ENCODE measurements at regions of chr16 and their contacts with region 1.

Region 1: GRCh38 chr16:30355144-30355894 is at the start of gene CD2BP2:
- DNase-seq: peak; percentile 81
- ATAC-seq: peak; percentile 84
- H3K4me3 Mint-ChIP-seq: peak within 1 kb of the TSS; percentile 96
- H3K27ac Mint-ChIP-seq: peak within 1 kb of the TSS; percentile 91
- H3K4me1 Mint-ChIP-seq: peaks cover 49% of the 10 kb centered on the region
- H3K27me3 Mint-ChIP-seq: no peaks in the 10 kb centered on the region
- CTCF ChIP-seq: no peak
- total RNA-seq, gene CD2BP2: 87.8 and 88.0 TPM in 2 replicates

Region 2: GRCh38 chr16:30370444-30371247 is 15.3 kb after region 1 on chr16 and contains the start of gene TBC1D10B:
- CTCF ChIA-PET with region 1: interaction called, 7 read pairs
- POLR2A ChIA-PET with region 1: interaction called, 36 read pairs
- intact Hi-C with region 1: loop called (anchors 1 kb)
- DNase-seq: peak; percentile 92
- ATAC-seq: peak; percentile 83
- H3K4me3 Mint-ChIP-seq: peak within 1 kb of the TSS; percentile 87
- H3K27ac Mint-ChIP-seq: peak within 1 kb of the TSS; percentile 86
- H3K4me1 Mint-ChIP-seq: peaks cover 52% of the 10 kb centered on the region
- H3K27me3 Mint-ChIP-seq: no peaks in the 10 kb centered on the region
- CTCF ChIP-seq: no peak
- total RNA-seq, gene TBC1D10B: 46.3 and 50.2 TPM in 2 replicates

Region 3: GRCh38 chr16:30378236-30379204 is 23.2 kb after region 1 on chr16:
- CTCF ChIA-PET with region 1: no interaction called
- POLR2A ChIA-PET with region 1: interaction called, 21 read pairs
- intact Hi-C with region 1: loop called (anchors 2 kb)
- DNase-seq: peak; percentile 99
- ATAC-seq: peak; percentile 88
- H3K4me3 Mint-ChIP-seq: peak overlapping the region; percentile 92
- H3K27ac Mint-ChIP-seq: peak overlapping the region; percentile 100
- H3K4me1 Mint-ChIP-seq: peaks cover 62% of the 10 kb centered on the region
- H3K27me3 Mint-ChIP-seq: no peaks in the 10 kb centered on the region
- CTCF ChIP-seq: no peak

Region 4: GRCh38 chr16:30395155-30395991 is 40.1 kb after region 1 on chr16 and contains the start of gene ZNF48:
- CTCF ChIA-PET with region 1: no interaction called
- POLR2A ChIA-PET with region 1: interaction called, 15 read pairs
- intact Hi-C with region 1: loop called (anchors 2 kb)
- DNase-seq: peak; percentile 77
- ATAC-seq: peak; percentile 96
- H3K4me3 Mint-ChIP-seq: peak within 1 kb of the TSS; percentile 91
- H3K27ac Mint-ChIP-seq: peak within 1 kb of the TSS; percentile 78
- H3K4me1 Mint-ChIP-seq: peaks cover 31% of the 10 kb centered on the region
- H3K27me3 Mint-ChIP-seq: no peaks in the 10 kb centered on the region
- CTCF ChIP-seq: no peak
- total RNA-seq, gene ZNF48: 11.7 and 13.0 TPM in 2 replicates

Region 5: DNA sequence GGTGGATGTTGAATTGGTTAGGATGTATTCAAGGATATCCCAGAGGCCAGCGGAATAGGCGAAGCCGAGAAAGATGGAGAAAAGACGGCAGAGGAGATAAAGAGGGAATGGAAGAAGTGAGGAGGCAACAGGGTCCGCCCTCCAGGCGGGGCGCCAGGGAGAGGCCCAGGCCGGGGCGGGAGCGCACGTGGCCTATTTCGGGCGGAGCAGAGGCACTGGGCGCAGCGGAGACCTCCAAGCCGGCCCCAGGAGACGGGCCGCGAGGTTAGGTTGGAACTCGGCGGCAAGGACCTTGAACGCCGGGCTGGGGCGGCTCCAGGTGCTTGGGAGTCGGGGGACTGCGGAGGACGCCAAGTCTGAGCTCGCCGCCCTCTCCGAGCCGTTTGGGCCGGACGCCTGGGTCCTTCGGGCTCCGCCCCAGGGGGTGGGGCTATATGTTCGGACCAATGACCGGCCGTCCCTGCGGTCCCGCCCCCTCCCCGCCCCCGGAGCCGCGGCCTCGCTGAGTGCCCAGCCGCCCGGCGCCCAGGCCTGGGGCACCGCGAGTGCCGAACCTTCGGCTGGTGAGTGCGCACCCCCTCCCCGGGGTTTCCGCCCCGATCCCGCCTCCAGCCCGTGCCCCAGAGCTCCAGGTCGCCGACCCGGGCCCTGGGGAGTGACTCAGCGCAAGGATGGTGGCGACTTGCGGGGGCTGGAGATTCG is 51.9 kb after region 1 on chr16 and contains the start of gene ZNF771:
- CTCF ChIA-PET with region 1: interaction called, 10 read pairs
- POLR2A ChIA-PET with region 1: interaction called, 9 read pairs
- intact Hi-C with region 1: no loop called
- DNase-seq: peak; percentile 90
- ATAC-seq: peak; percentile 89
- H3K4me3 Mint-ChIP-seq: peak within 1 kb of the TSS; percentile 89
- H3K27ac Mint-ChIP-seq: peak within 1 kb of the TSS; percentile 90
- H3K4me1 Mint-ChIP-seq: peaks cover 27% of the 10 kb centered on the region
- H3K27me3 Mint-ChIP-seq: no peaks in the 10 kb centered on the region
- CTCF ChIP-seq: no peak
- total RNA-seq, gene ZNF771: 4.4 and 5.2 TPM in 2 replicates